AG04449 (cell line): ENCODE measurements at regions of chr2 and their contacts with region 1.

Region 1: GRCh38 chr2:177983183-177983788 is 89.3 kb downstream of the PDE11A start:
- DNase-seq: no peak
- H3K4me3 ChIP-seq: no peak overlapping the region
- CTCF ChIP-seq: peak; percentile 85

Region 2: GRCh38 chr2:177530561-177530960 is 452.7 kb before region 1 on chr2:
- CTCF ChIA-PET with region 1: no interaction called
- POLR2A ChIA-PET with region 1: no interaction called
- DNase-seq: no peak
- H3K4me3 ChIP-seq: no peak overlapping the region
- CTCF ChIP-seq: no peak

Region 3: GRCh38 chr2:177964892-177965291 is 18.4 kb before region 1 on chr2:
- CTCF ChIA-PET with region 1: interaction called, 20 read pairs
- POLR2A ChIA-PET with region 1: no interaction called
- DNase-seq: no peak
- H3K4me3 ChIP-seq: no peak overlapping the region
- CTCF ChIP-seq: no peak

Region 4: GRCh38 chr2:177970670-177971454 is 12.4 kb before region 1 on chr2:
- CTCF ChIA-PET with region 1: interaction called, 20 read pairs
- POLR2A ChIA-PET with region 1: no interaction called
- DNase-seq: no peak
- H3K4me3 ChIP-seq: no peak overlapping the region
- CTCF ChIP-seq: no peak

Region 5: DNA sequence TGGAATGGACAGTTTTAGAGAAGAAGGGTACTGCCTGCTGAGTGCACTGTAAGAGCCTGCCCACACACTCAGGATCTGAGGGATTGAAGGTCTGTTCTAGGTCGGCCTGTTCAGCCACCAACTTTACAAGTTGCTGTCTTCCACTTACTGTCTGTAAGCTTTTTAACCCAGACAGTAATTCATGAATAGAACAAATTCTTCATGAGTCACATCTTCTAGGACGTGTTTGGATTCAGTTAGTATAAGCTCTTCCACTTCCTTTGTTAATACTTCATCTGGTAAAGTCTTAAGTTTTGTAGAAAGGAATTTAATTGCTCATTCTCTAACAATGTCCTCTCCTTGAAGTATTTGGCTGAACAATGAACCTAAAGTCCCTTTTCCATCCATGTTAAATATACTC is 14.7 kb after region 1 on chr2:
- CTCF ChIA-PET with region 1: interaction called, 25 read pairs
- POLR2A ChIA-PET with region 1: no interaction called
- DNase-seq: peak; percentile 69
- H3K4me3 ChIP-seq: no peak overlapping the region
- CTCF ChIP-seq: no peak

Region 6: DNA sequence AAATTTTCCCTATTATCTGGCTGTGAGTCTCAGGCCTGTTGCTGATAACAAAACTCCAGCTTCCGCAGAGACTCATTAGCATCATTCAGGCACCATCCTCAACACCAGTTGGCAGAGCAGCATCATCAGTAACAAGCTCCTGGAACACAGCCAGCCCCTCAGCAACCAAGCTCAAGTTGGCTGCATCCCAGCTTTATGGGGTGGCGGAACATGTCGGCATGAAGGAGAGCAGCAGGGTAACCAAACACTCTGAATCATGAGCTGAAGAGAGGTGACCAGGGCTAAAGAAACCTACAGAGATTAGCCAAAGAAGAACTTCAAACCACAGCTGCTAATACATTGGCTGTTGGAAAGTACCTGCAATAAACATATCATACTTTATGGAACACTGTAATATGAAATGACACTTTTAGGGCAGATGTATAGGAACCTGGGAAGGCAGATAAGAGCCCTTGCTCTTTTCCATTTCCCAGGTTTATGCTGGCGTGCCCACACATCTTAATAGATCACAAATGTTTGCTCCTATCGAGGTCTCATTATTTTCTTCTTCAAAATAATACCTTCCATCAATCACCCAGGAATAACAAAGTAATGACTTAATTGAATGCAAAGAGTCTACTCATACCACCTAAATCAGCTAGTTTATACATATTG is 25.5 kb after region 1 on chr2:
- CTCF ChIA-PET with region 1: interaction called, 10 read pairs
- POLR2A ChIA-PET with region 1: no interaction called
- DNase-seq: no peak
- H3K4me3 ChIP-seq: no peak overlapping the region
- CTCF ChIP-seq: no peak

Region 7: DNA sequence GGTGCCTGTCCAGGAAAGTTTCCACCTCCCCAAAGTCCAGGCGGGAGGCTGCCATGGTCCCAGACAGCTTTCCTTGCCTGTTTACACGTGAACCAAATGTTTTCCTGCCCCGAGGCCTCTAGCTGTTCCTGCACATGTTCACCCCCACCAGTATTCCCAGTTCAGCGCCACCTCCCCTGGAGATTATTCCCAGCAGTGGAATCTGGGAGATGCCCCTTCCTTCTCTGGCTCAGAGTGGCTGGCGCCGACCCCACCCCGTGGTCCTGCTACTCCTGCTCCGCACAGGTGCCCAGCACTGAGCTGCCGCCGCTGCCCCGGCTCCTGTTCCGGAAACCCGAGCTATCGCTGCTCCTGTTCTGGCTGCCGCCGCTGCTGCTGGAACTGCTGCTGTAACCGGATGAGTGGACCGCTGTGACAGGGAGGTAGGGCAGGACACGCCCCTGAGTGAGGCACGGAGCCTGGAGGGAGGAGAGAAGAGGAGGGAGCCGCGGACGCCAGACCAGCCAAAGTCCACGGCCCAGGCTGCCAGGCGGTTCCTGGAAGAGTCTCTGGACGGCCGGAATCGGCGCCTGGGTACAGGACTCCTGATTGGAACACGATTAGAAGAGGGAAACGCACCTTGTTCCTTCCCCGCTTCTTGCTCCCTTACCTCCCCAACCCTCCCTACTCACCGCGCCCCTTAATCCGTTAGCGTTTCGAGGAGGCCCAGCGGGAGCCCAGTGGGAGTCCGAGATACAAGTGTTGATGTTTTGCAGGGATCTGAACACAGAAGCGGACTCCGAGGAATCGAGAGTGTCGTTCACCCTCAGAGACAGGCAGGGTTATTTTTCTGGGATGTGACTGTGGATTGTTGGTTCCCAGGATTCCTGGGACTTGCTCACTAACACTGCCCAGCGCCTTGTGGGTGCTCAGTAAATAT is 89.4 kb after region 1 on chr2 and contains the start of gene PDE11A:
- CTCF ChIA-PET with region 1: interaction called, 43 read pairs
- POLR2A ChIA-PET with region 1: no interaction called
- DNase-seq: peak; percentile 17
- H3K4me3 ChIP-seq: peak within 1 kb of the TSS; percentile 59
- CTCF ChIP-seq: no peak

Region 8: GRCh38 chr2:178101321-178102079 is 118.2 kb after region 1 on chr2:
- CTCF ChIA-PET with region 1: interaction called, 11 read pairs
- POLR2A ChIA-PET with region 1: no interaction called
- DNase-seq: no peak
- H3K4me3 ChIP-seq: no peak overlapping the region
- CTCF ChIP-seq: no peak